K562 (cell line): ENCODE measurements at regions of chr17 and their contacts with region 1.

Region 1: GRCh38 chr17:35808962-35809854 is at the start of gene TAF15:
- DNase-seq: peak; percentile 96 to 98 (median 96)
- ATAC-seq: peak; percentile 95
- H3K4me3 ChIP-seq: peak within 1 kb of the TSS; percentile 87
- H3K27ac ChIP-seq: peak within 1 kb of the TSS; percentile 99
- H3K4me1 ChIP-seq: peaks cover 9 to 19% of the 10 kb centered on the region in 2 experiments; a peak in 4 of 5 replicates
- H3K27me3 ChIP-seq: no peaks in the 10 kb centered on the region
- CTCF ChIP-seq: peak; percentile 86 to 94 (median 89)
- EP300 ChIP-seq: no peak
- POLR2A ChIP-seq: peak; percentile 99
- RAD21 ChIP-seq: peak; percentile 32 to 47; a peak in 3 of 4 replicates
- polyA plus RNA-seq, gene TAF15: 4.1 to 22.7 TPM

Region 2: DNA sequence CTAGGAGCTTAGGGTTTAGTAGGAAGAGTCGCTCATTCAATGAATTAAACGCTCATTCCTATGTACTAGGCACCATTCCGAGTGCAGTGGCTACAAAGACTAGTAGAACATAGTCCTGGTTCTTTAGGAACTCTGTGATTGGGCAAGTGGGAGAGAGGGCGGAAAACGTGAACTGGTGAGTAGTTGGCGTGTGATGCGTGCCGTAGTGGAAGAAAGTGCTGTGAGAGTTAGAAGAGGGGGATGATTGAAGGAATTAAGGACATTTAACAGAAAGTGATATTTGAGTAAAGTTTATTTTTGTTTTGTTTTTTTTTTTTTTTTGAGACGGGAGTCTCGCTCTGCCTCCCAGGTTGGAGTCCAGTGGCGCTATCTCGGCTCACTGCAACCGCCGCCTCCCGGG is 240.7 kb before region 1 on chr17:
- CTCF ChIA-PET with region 1: no interaction called
- POLR2A ChIA-PET with region 1: interaction called, 3 read pairs
- in situ Hi-C with region 1: no loop called
- intact Hi-C with region 1: loop called (anchors 5 kb)
- DNase-seq: peak; percentile 24 to 65 (median 42)
- ATAC-seq: peak; percentile 52
- H3K4me3 ChIP-seq: peak overlapping the region; percentile 93
- H3K27ac ChIP-seq: peak overlapping the region; percentile 96
- H3K4me1 ChIP-seq: peaks cover 15 to 40% of the 10 kb centered on the region in 2 experiments
- H3K27me3 ChIP-seq: no peaks in the 10 kb centered on the region
- CTCF ChIP-seq: no peak
- EP300 ChIP-seq: no peak
- POLR2A ChIP-seq: no peak
- RAD21 ChIP-seq: no peak

Region 3: DNA sequence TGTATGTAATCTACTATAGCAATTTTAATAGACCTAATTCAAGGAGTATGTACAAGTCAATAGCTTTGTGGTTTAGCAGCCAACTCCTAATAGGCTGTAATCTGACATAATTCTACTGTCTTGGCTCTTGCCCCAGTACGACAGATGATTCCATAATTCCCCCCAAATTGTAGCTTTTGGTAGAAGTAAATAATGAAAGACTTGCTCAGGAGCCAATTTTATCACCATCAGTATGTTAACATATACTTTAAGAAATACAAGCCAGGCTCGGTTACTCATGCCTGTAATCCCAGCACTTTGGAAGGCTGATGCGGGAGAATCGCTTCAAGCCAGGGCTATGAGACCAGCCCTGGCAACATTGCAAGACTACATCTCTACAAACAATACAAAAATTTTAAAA is 168.2 kb before region 1 on chr17:
- CTCF ChIA-PET with region 1: no interaction called
- POLR2A ChIA-PET with region 1: no interaction called
- in situ Hi-C with region 1: no loop called
- intact Hi-C with region 1: no loop called
- DNase-seq: no peak
- ATAC-seq: no peak
- H3K4me3 ChIP-seq: no peak overlapping the region
- H3K27ac ChIP-seq: no peak overlapping the region
- H3K4me1 ChIP-seq: no peaks in the 10 kb centered on the region
- H3K27me3 ChIP-seq: no peaks in the 10 kb centered on the region
- CTCF ChIP-seq: no peak
- EP300 ChIP-seq: no peak
- POLR2A ChIP-seq: no peak
- RAD21 ChIP-seq: no peak

Region 4: DNA sequence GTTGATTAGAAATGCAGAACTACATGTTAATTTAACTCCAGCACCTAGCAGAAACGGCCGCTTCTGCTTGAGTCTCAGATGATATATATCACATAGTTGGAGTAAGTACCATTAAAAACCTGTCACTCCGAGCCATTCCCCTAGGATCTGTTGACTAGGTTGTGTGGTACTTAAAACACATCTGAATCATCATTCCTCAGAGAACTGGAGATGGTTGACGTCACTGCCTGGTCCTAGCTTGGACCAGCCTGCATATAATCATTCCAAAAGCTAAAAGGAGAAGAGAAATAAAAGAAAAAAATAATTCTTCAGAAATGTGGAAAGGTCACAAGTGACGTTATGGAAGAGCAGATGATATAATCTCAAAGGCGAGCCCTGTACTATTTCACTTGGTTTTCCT is 109.1 kb before region 1 on chr17:
- CTCF ChIA-PET with region 1: no interaction called
- POLR2A ChIA-PET with region 1: no interaction called
- in situ Hi-C with region 1: no loop called
- intact Hi-C with region 1: no loop called
- DNase-seq: no peak
- ATAC-seq: no peak
- H3K4me3 ChIP-seq: no peak overlapping the region
- H3K27ac ChIP-seq: no peak overlapping the region
- H3K4me1 ChIP-seq: no peaks in the 10 kb centered on the region
- H3K27me3 ChIP-seq: no peaks in the 10 kb centered on the region
- CTCF ChIP-seq: no peak
- EP300 ChIP-seq: no peak
- POLR2A ChIP-seq: no peak
- RAD21 ChIP-seq: no peak

Region 5: DNA sequence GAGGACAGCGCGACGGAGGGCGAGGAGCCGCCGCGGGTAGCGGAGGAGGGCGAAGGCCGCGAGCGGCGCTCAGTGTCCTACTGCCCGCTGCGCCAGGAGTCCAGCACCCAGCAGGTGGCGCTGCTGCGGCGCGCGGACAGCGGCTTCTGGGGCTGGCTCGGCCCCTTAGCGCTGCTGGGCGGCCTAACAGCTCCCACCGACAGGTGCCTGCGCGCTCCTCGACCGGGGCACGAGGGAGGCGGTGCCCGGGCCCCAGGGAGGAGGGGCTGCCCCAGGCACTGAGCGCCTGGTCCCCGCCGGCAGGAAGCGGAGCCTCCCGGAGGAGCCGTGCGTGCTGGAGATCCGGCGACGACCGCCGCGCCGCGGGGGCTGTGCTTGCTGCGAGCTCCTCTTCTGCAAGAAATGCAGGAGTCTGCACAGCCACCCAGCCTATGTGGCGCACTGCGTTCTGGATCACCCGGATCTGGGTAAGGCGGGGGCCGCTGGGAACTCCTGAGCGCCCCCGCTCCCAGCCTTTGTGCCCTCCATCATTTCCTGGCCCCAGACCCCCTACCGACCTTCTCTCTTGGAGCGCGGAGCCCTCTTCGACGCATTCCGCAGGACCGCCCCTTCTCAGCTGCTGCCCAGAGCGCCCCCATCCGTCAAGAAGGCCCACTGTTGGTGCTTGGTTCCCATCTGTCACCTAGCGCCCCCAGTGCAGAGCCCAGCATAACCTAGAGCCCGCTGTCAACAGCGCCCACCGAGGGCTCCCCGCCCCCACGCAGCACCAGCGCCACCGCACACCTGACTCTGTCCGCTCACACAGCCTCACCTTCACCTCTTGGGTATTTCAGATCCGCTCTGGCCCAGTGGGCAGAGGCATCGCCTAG is 44.9 kb before region 1 on chr17:
- CTCF ChIA-PET with region 1: interaction called, 39 read pairs
- POLR2A ChIA-PET with region 1: interaction called, 13 read pairs
- in situ Hi-C with region 1: loop called (anchors 5 kb)
- intact Hi-C with region 1: loop called (anchors 1 kb)
- DNase-seq: peak; percentile 91 to 94 (median 92)
- ATAC-seq: peak; percentile 99
- H3K4me3 ChIP-seq: peak overlapping the region; percentile 45
- H3K27ac ChIP-seq: no peak overlapping the region
- H3K4me1 ChIP-seq: peaks cover 0 to 18% of the 10 kb centered on the region in 2 experiments; a peak in 3 of 5 replicates
- H3K27me3 ChIP-seq: peaks cover 32 to 70% of the 10 kb centered on the region in 2 experiments; a peak in 4 of 5 replicates
- CTCF ChIP-seq: peak; percentile 87 to 99 (median 97)
- EP300 ChIP-seq: no peak
- POLR2A ChIP-seq: no peak
- RAD21 ChIP-seq: peak; percentile 79 to 95

Region 6: DNA sequence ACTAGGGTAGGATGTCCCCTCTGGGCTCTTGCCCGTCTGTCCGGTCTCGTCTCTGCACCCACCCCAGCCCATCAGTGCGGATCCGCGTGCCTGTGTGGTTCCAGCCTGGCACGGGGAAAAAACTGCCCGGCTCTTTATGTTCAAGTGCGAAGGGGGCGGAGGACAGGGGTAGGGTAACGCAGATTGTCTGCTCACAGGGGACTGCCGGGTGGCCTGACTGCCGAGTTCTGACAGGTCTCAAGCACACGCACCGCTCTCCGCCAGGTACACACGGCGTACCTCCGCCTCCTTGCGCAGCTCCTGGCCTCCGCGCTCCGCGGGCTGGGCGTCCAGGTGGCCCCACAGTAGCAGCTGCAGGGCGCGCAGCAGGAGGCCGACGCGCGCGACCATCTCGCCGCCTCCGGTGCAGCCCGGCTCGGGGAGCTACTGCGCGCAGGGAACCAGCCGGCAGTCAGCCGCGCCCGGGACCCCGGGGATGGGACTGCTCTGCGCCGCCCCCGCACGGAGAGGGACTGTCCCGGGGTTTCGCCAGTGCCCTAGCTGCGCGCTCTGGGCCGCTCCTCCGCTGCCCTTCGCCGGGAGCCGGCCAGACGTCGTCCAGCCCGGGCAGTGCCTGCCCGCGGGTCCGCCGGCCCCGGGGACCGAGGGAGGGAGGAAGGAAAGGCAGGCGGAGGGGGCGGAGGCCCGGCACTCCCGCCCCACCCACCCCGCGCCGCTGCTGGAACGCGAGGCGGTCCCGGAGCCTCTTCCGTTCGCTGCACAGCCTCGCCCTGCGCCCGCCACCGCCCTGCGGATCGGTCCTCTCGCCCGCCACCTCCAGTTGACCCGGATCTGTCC is 14.0 kb before region 1 on chr17 and contains the start of gene MMP28:
- CTCF ChIA-PET with region 1: no interaction called
- POLR2A ChIA-PET with region 1: interaction called, 13 read pairs
- in situ Hi-C with region 1: no loop called
- intact Hi-C with region 1: no loop called
- DNase-seq: peak; percentile 43 to 74 (median 66)
- ATAC-seq: peak; percentile 82
- H3K4me3 ChIP-seq: peak within 1 kb of the TSS; percentile 4; the same call in 1 of the 2 replicates
- H3K27ac ChIP-seq: no peak within 1 kb of the TSS
- H3K4me1 ChIP-seq: peaks cover 0 to 14% of the 10 kb centered on the region in 2 experiments; a peak in 4 of 5 replicates
- H3K27me3 ChIP-seq: peaks cover 48 to 72% of the 10 kb centered on the region in 2 experiments
- CTCF ChIP-seq: no peak
- EP300 ChIP-seq: no peak
- POLR2A ChIP-seq: no peak
- RAD21 ChIP-seq: no peak
- polyA plus RNA-seq, gene MMP28: not detected